HepG2 (cell line): ENCODE measurements at regions of chr9 and their contacts with region 1.

Region 1: GRCh38 chr9:82938340-82938739 is 124.6 kb downstream of the RASEF start:
- DNase-seq: no peak
- ATAC-seq: no peak
- H3K4me3 ChIP-seq: no peak overlapping the region
- H3K27ac ChIP-seq: no peak overlapping the region
- H3K4me1 ChIP-seq: peaks cover 5% of the 10 kb centered on the region; the same call in 1 of the 2 replicates
- H3K27me3 ChIP-seq: no peaks in the 10 kb centered on the region
- CTCF ChIP-seq: no peak
- EP300 ChIP-seq: no peak
- POLR2A ChIP-seq: no peak
- RAD21 ChIP-seq: no peak

Region 2: GRCh38 chr9:82382887-82383616 is 555.3 kb before region 1 on chr9:
- CTCF ChIA-PET with region 1: no interaction called
- POLR2A ChIA-PET with region 1: no interaction called
- in situ Hi-C with region 1: no loop called
- intact Hi-C with region 1: no loop called
- DNase-seq: no peak
- ATAC-seq: no peak
- H3K4me3 ChIP-seq: no peak overlapping the region
- H3K27ac ChIP-seq: no peak overlapping the region
- H3K4me1 ChIP-seq: no peaks in the 10 kb centered on the region
- H3K27me3 ChIP-seq: no peaks in the 10 kb centered on the region
- CTCF ChIP-seq: no peak
- EP300 ChIP-seq: no peak
- POLR2A ChIP-seq: no peak
- RAD21 ChIP-seq: no peak

Region 3: DNA sequence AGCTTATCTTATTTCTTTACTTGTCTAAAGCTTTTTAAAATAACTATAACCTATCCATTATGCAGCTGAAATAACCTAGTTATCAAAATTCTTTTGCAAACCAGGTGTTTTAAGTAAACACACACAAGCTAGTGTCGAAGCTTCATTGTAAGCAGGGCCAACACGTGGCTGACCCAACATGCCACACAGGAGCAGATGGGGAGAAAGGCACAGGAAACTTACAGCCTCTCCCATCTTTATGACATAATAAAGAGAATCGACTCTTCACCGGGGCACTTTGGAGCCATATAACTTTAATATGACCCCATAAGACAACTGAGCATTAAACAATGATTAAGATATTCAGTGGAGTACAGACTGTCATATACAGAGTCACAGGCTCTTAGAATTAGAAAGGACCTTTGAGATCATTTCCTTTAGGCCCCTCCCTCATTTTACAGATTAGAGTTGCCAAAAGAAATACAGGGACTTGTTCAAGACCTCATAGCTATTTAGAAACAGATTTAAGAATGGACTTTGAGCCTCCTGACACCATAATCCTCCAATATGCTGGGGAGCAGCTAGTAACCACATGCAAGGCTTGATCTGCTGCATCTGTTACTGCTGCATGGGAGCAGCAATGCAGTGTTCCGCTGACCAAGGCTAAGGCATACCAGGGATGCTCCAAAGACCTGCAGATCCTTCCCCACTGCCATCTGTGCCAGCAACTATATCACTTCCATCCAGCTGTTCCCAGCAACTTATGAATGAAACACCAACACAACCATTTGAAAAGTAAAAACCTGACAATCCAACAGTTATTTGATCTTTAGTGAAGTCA is 49.2 kb after region 1 on chr9:
- CTCF ChIA-PET with region 1: no interaction called
- POLR2A ChIA-PET with region 1: no interaction called
- in situ Hi-C with region 1: no loop called
- intact Hi-C with region 1: loop called (anchors 1 kb)
- DNase-seq: no peak
- ATAC-seq: no peak
- H3K4me3 ChIP-seq: no peak overlapping the region
- H3K27ac ChIP-seq: no peak overlapping the region
- H3K4me1 ChIP-seq: peaks cover 19% of the 10 kb centered on the region
- H3K27me3 ChIP-seq: peaks cover 0 to 2% of the 10 kb centered on the region in 2 experiments; a peak in 1 of 5 replicates
- CTCF ChIP-seq: no peak
- EP300 ChIP-seq: no peak
- POLR2A ChIP-seq: no peak
- RAD21 ChIP-seq: no peak